ENCODE measurements at regions of chr4 and their contacts with region 1.

Region 1: DNA sequence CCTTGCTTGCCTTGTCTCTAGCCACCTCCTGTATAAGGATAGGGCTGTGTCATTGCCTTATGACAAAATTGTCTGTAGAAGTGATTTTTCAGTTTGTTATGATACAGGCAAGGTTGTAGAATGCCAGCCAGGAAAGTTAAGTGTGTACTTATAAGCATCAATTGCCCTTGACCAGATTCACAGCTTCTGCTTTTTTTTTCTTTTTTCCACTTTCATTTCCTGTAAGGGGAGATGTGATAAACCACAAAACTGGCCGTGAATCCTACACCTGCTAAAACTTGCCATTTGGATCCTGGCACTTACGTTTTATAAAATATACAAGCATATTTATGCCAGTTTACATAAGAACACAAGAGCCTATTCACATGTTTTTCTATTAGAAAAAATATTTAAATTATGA is 35.0 kb upstream of the BMPR1B start:
- DNase-seq: no peak
- ATAC-seq: no peak
- H3K4me3 ChIP-seq: no peak overlapping the region
- H3K27ac ChIP-seq: no peak overlapping the region
- H3K4me1 ChIP-seq: peaks cover 9% of the 10 kb centered on the region; the same call in 1 of the 2 replicates
- H3K27me3 ChIP-seq: no peaks in the 10 kb centered on the region
- CTCF ChIP-seq: no peak
- EP300 ChIP-seq: no peak
- POLR2A ChIP-seq: no peak
- RAD21 ChIP-seq: no peak

Region 2: GRCh38 chr4:92760433-92760832 is 1962.3 kb before region 1 on chr4:
- CTCF ChIA-PET with region 1: no interaction called
- POLR2A ChIA-PET with region 1: no interaction called
- in situ Hi-C with region 1: no loop called
- intact Hi-C with region 1: loop called (anchors 5 kb)
- DNase-seq: no peak
- ATAC-seq: no peak
- H3K4me3 ChIP-seq: no peak overlapping the region
- H3K27ac ChIP-seq: no peak overlapping the region
- H3K4me1 ChIP-seq: no peaks in the 10 kb centered on the region
- H3K27me3 ChIP-seq: no peaks in the 10 kb centered on the region
- CTCF ChIP-seq: no peak
- EP300 ChIP-seq: no peak
- POLR2A ChIP-seq: no peak
- RAD21 ChIP-seq: no peak

Region 3: GRCh38 chr4:94621491-94622080 is 101.2 kb before region 1 on chr4:
- CTCF ChIA-PET with region 1: no interaction called
- POLR2A ChIA-PET with region 1: no interaction called
- in situ Hi-C with region 1: no loop called
- intact Hi-C with region 1: no loop called
- DNase-seq: peak; percentile 28
- ATAC-seq: peak; percentile 63
- H3K4me3 ChIP-seq: no peak overlapping the region
- H3K27ac ChIP-seq: no peak overlapping the region
- H3K4me1 ChIP-seq: no peaks in the 10 kb centered on the region
- H3K27me3 ChIP-seq: no peaks in the 10 kb centered on the region
- CTCF ChIP-seq: peak; percentile 64
- EP300 ChIP-seq: no peak
- POLR2A ChIP-seq: no peak
- RAD21 ChIP-seq: no peak

Measured in HepG2 (cell line).